Activated CD8-positive, alpha-beta T cell treated with anti-CD3 and anti-CD28 coated beads for 36 hours (primary cell): ENCODE measurements at regions of chr12 and their contacts with region 1.

Region 1: GRCh38 chr12:118404876-118405521 is 28.6 kb downstream of the SUDS3 start:
- DNase-seq: peak; percentile 84
- ATAC-seq: peak; percentile 74
- H3K4me3 Mint-ChIP-seq: no peak overlapping the region
- H3K27ac Mint-ChIP-seq: no peak overlapping the region
- H3K4me1 Mint-ChIP-seq: peaks cover 2% of the 10 kb centered on the region
- H3K27me3 Mint-ChIP-seq: no peaks in the 10 kb centered on the region
- CTCF ChIP-seq: peak; percentile 84

Region 2: DNA sequence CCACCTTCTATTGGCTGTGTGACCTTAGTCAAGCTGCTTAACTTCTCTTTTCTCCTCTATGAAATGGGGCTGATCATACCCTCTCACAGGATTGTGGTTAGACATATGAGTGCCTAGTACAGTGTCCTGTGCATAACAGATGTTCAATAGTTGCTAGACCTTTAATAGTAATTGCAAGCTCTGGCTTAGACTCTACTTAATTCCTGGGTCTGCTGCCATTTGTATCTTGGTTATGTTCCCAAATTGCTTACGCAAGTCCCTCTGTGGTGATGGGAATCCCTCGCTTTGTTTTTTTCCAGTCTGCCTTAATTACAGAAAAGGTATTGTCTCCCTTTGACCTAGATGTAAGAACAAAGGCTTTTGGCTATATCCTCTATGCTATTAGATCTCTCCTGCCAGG is 13.6 kb before region 1 on chr12:
- CTCF ChIA-PET with region 1: interaction called, 13 read pairs
- POLR2A ChIA-PET with region 1: interaction called, 3 read pairs
- intact Hi-C with region 1: no loop called
- DNase-seq: no peak
- ATAC-seq: no peak
- H3K4me3 Mint-ChIP-seq: no peak overlapping the region
- H3K27ac Mint-ChIP-seq: no peak overlapping the region
- H3K4me1 Mint-ChIP-seq: no peaks in the 10 kb centered on the region
- H3K27me3 Mint-ChIP-seq: no peaks in the 10 kb centered on the region
- CTCF ChIP-seq: no peak

Region 3: GRCh38 chr12:118418385-118419057 is 13.5 kb after region 1 on chr12:
- CTCF ChIA-PET with region 1: interaction called, 15 read pairs
- POLR2A ChIA-PET with region 1: interaction called, 3 read pairs
- intact Hi-C with region 1: no loop called
- DNase-seq: no peak
- ATAC-seq: no peak
- H3K4me3 Mint-ChIP-seq: no peak overlapping the region
- H3K27ac Mint-ChIP-seq: no peak overlapping the region
- H3K4me1 Mint-ChIP-seq: no peaks in the 10 kb centered on the region
- H3K27me3 Mint-ChIP-seq: no peaks in the 10 kb centered on the region
- CTCF ChIP-seq: no peak

Region 4: DNA sequence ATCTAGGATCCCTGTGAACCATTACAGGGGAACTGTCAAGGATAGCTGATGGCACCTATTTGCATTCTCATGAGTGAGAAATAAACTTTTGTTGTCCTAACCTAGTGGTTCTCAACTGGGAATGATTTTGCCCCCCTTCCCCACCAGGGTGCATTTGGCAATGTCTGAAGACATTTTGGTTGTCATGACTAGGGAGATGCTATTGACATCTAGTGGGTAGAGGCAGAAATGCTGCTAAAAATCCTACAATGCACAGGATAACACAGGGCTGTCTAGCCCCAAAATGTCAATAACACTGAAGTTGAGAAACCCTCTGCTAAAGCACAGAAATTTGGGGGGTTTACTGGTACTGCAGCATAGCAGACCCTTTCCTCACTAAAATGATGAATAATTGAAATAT is 435.4 kb after region 1 on chr12:
- CTCF ChIA-PET with region 1: no interaction called
- POLR2A ChIA-PET with region 1: no interaction called
- intact Hi-C with region 1: loop called (anchors 10 kb)
- DNase-seq: no peak
- ATAC-seq: no peak
- H3K4me3 Mint-ChIP-seq: no peak overlapping the region
- H3K27ac Mint-ChIP-seq: no peak overlapping the region
- H3K4me1 Mint-ChIP-seq: no peaks in the 10 kb centered on the region
- H3K27me3 Mint-ChIP-seq: no peaks in the 10 kb centered on the region
- CTCF ChIP-seq: no peak